Heart right ventricle (tissue), 16 donors: ENCODE measurements at regions of chr7 and their contacts with region 1.

Region 1: DNA sequence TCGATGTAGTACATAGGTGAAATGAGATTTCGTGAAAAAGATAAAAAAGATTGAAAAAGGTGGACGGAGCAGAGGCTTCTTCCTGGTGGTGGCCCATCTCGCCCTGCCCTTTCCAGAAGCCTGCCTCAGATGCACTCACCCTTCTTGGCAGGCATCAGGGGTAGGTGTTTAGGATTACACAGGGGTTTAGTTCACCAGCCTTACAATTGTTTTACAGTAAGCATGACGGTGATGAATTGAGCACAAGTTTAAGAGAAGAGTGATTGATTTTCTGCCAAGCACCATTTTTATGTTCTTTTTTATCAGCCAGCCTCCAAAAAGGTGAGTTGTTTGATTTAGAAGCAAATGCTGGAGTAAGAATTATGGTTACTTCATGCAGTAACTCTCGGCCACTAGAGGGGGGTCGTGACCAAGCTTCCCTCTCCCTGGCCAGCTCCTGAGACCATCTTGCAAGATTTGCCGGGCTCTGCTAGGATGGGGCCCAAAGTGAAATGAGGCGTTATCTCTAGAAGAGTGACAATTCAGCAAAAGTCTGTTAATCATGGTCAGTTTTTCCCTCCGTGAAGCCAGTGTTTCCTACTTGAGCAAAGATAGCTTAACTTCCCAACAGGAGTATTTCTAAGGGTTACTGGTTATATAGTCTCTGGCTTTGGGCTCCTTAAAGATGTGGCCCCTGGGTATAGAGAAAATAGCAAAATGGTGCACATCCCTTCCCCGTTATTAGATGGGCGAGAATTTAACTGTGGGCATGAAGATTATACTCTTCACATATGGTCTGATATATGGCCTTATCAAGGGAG is 228.8 kb downstream of the BMPER start:
- DNase-seq: peak; percentile 55 to 56
- ATAC-seq: peak in 7 of 8 donors; percentile 61 to 75 (median 66)
- H3K4me3 ChIP-seq: no peak overlapping the region
- H3K27ac ChIP-seq: no peak overlapping the region
- H3K4me1 ChIP-seq: peaks cover 0 to 3% (median 0%) of the 10 kb centered on the region in 9 donors
- H3K27me3 ChIP-seq: no peaks in the 10 kb centered on the region
- CTCF ChIP-seq: peak; percentile 40 to 74 (median 69)

Region 2: DNA sequence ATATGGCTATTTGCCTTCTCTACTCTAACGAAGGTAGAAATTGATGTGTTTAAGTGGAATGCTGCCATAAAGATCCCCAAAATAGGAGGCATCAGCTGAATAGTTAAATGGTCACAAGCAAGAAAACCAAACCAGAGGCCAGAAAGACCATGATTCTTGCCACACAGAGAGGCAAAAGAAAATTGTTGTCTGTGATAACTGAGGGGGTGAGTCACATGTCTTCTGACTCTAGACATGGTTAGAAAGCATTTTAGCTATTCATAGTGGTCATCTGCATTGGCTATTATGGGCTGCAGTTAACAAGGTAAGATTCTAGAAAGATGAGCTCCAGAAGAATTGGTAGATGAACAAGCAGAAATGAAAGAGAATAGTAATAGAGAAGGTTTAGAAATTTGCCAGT is 162.5 kb after region 1 on chr7:
- intact Hi-C with region 1: loop called in 1 of 10 experiments (anchors 10 kb)
- DNase-seq: no peak
- ATAC-seq: no peak
- H3K4me3 ChIP-seq: no peak overlapping the region
- H3K27ac ChIP-seq: no peak overlapping the region
- H3K4me1 ChIP-seq: no peaks in the 10 kb centered on the region
- H3K27me3 ChIP-seq: no peaks in the 10 kb centered on the region
- CTCF ChIP-seq: no peak

Region 3: GRCh38 chr7:34596892-34597291 is 462.7 kb after region 1 on chr7:
- intact Hi-C with region 1: loop called in 2 of 10 experiments (anchors 5 to 10 kb)
- DNase-seq: no peak
- ATAC-seq: no peak
- H3K4me3 ChIP-seq: no peak overlapping the region
- H3K27ac ChIP-seq: no peak overlapping the region
- H3K4me1 ChIP-seq: no peaks in the 10 kb centered on the region
- H3K27me3 ChIP-seq: no peaks in the 10 kb centered on the region
- CTCF ChIP-seq: peak in 7 of 9 donors; percentile 25 to 52 (median 38)